ENCODE measurements at regions of chr1 and their contacts with region 1.

Region 1: GRCh38 chr1:67430352-67431155 is at the start of gene SERBP1:
- DNase-seq: peak; percentile 93 to 97
- H3K4me3 ChIP-seq: peak within 1 kb of the TSS; percentile 78
- H3K27ac ChIP-seq: peak within 1 kb of the TSS; percentile 88
- H3K4me1 ChIP-seq: peaks cover 34% of the 10 kb centered on the region
- H3K27me3 ChIP-seq: no peaks in the 10 kb centered on the region
- CTCF ChIP-seq: 0 out of 2 replicates have a peak, but pooled peaks have one; percentile 11
- total RNA-seq, gene SERBP1: 312 and 339 TPM in 2 replicates

Region 2: GRCh38 chr1:66929999-66930822 is 500.3 kb before region 1 on chr1:
- CTCF ChIA-PET with region 1: no interaction called
- POLR2A ChIA-PET with region 1: no interaction called
- intact Hi-C with region 1: loop called (anchors 5 kb)
- DNase-seq: peak; percentile 72 to 97
- H3K4me3 ChIP-seq: peak overlapping the region; percentile 95
- H3K27ac ChIP-seq: peak overlapping the region; percentile 70
- H3K4me1 ChIP-seq: peaks cover 47% of the 10 kb centered on the region
- H3K27me3 ChIP-seq: no peaks in the 10 kb centered on the region
- CTCF ChIP-seq: no peak; the same call in 1 of the 2 replicates

Region 3: DNA sequence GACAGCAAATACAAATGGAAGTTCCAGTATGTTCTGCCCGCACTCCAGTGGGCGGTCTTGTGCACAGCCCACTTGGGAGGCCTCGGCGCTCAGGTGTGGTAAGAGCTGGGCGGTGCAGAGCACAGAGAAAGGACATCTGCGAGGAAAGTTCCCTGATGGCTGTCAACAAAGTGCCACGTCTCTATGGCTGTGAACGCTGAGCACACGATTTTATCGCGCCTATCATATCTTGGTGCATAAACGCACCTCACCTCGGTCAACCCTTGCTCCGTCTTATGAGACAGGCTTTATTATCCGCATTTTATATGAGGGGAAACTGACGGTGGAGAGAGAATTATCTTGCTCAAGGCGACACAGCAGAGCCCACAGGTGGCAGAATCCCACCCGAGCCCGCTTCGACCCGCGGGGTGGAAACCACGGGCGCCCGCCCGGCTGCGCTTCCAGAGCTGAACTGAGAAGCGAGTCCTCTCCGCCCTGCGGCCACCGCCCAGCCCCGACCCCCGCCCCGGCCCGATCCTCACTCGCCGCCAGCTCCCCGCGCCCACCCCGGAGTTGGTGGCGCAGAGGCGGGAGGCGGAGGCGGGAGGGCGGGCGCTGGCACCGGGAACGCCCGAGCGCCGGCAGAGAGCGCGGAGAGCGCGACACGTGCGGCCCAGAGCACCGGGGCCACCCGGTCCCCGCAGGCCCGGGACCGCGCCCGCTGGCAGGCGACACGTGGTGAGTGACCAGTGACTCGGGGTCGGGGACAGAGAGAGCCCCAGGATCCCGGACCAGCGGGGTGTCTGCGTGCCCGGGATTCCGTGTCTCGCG is 123.1 kb before region 1 on chr1 and contains the start of gene IL12RB2:
- CTCF ChIA-PET with region 1: no interaction called
- POLR2A ChIA-PET with region 1: no interaction called
- intact Hi-C with region 1: no loop called
- DNase-seq: no peak
- H3K4me3 ChIP-seq: no peak within 1 kb of the TSS
- H3K27ac ChIP-seq: no peak within 1 kb of the TSS
- H3K4me1 ChIP-seq: no peaks in the 10 kb centered on the region
- H3K27me3 ChIP-seq: no peaks in the 10 kb centered on the region
- CTCF ChIP-seq: no peak
- total RNA-seq, gene IL12RB2: not detected in 2 replicates

Region 4: GRCh38 chr1:67347688-67348472 is 82.7 kb before region 1 on chr1:
- CTCF ChIA-PET with region 1: interaction called, 6 read pairs
- POLR2A ChIA-PET with region 1: interaction called, 5 read pairs
- intact Hi-C with region 1: loop called (anchors 1 kb)
- DNase-seq: peak; percentile 55
- H3K4me3 ChIP-seq: no peak overlapping the region
- H3K27ac ChIP-seq: no peak overlapping the region
- H3K4me1 ChIP-seq: no peaks in the 10 kb centered on the region
- H3K27me3 ChIP-seq: no peaks in the 10 kb centered on the region
- CTCF ChIP-seq: peak; percentile 78

Region 5: GRCh38 chr1:67479146-67479891 is 48.8 kb after region 1 on chr1:
- CTCF ChIA-PET with region 1: no interaction called
- POLR2A ChIA-PET with region 1: interaction called, 5 read pairs
- intact Hi-C with region 1: loop called (anchors 5 kb)
- DNase-seq: peak; percentile 39 to 47
- H3K4me3 ChIP-seq: no peak overlapping the region
- H3K27ac ChIP-seq: no peak overlapping the region
- H3K4me1 ChIP-seq: 0 out of 2 replicates have a peak, but pooled peaks cover 3% of the 10 kb centered on the region
- H3K27me3 ChIP-seq: no peaks in the 10 kb centered on the region
- CTCF ChIP-seq: no peak

Region 6: GRCh38 chr1:67489643-67490042 is 59.1 kb after region 1 on chr1:
- CTCF ChIA-PET with region 1: no interaction called
- POLR2A ChIA-PET with region 1: no interaction called
- intact Hi-C with region 1: loop called (anchors 2 kb)
- DNase-seq: peak in 1 of 2 experiments; percentile 6
- H3K4me3 ChIP-seq: no peak overlapping the region
- H3K27ac ChIP-seq: no peak overlapping the region
- H3K4me1 ChIP-seq: no peaks in the 10 kb centered on the region
- H3K27me3 ChIP-seq: no peaks in the 10 kb centered on the region
- CTCF ChIP-seq: peak; percentile 43; the same call in 1 of the 2 replicates

Region 7: DNA sequence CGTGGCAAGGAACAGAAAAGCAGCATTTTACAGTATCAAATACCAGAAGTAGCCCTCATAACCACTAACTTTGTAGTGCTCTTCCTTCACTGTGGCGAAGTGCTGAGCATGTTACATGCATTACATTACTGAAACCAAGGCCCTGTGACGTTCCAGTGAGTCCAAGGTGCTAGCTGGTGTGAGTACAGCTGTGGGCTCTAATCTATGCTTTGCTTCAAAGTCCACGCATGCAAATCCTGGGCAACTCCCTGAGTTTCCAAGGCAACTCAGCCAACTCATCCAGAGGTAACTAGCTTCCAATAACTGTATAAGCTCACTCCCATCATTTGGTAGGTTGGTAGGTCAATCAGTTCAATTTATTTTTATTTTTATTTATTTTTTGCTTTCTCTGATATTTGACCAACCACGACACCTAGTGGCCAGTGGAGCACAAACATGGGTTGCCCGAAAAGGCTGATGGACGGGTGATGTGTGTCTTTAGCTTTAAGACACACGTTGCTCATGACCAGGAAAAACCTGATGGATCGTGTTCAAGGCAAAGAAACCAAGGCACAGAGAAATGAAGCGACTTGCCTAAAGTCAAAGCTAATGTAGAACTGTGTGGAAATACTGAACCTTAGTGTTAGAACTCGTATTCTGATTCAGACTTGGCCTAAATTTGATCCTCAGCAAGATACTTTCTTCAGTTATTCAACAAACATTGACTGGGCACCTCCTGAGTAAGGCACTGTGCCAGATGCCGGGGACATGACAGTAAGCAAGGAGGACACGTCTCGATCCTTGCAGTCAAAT is 329.7 kb after region 1 on chr1:
- CTCF ChIA-PET with region 1: no interaction called
- POLR2A ChIA-PET with region 1: no interaction called
- intact Hi-C with region 1: loop called (anchors 10 kb)
- DNase-seq: peak; percentile 63 to 71
- H3K4me3 ChIP-seq: no peak overlapping the region
- H3K27ac ChIP-seq: 0 out of 2 replicates have a peak overlapping the region, but pooled peaks have one; percentile 4
- H3K4me1 ChIP-seq: peaks cover 12% of the 10 kb centered on the region
- H3K27me3 ChIP-seq: no peaks in the 10 kb centered on the region
- CTCF ChIP-seq: peak; percentile 99